ENCODE measurements at regions of chr10 and their contacts with region 1.

Region 1: GRCh38 chr10:93482145-93482834 is at the start of gene MYOF:
- DNase-seq: peak; percentile 69 to 84
- H3K4me3 ChIP-seq: peak within 1 kb of the TSS; percentile 52 to 66 (median 65)
- H3K27ac ChIP-seq: peak within 1 kb of the TSS; percentile 87 to 97
- H3K4me1 ChIP-seq: peaks cover 0 to 9% of the 10 kb centered on the region in 2 donors
- H3K27me3 ChIP-seq: no peaks in the 10 kb centered on the region
- CTCF ChIP-seq: peak; percentile 37 to 78 (median 72)
- POLR2A ChIP-seq: peak; percentile 81
- total RNA-seq, gene MYOF: 118 to 131 (median 130) TPM

Region 2: GRCh38 chr10:93376372-93377293 is 105.7 kb before region 1 on chr10:
- intact Hi-C with region 1: loop called (anchors 2 kb)
- DNase-seq: peak in 1 of 2 donors; percentile 47
- H3K4me3 ChIP-seq: no peak overlapping the region
- H3K27ac ChIP-seq: peak overlapping the region; percentile 74 to 86
- H3K4me1 ChIP-seq: no peaks in the 10 kb centered on the region
- H3K27me3 ChIP-seq: no peaks in the 10 kb centered on the region
- CTCF ChIP-seq: peak; percentile 96 to 99 (median 98)
- POLR2A ChIP-seq: no peak

Region 3: GRCh38 chr10:93437088-93437945 is 45.0 kb before region 1 on chr10:
- intact Hi-C with region 1: loop called (anchors 5 kb)
- DNase-seq: peak; percentile 66 to 88
- H3K4me3 ChIP-seq: peak overlapping the region in 2 of 3 donors; percentile 23 to 55
- H3K27ac ChIP-seq: peak overlapping the region; percentile 100
- H3K4me1 ChIP-seq: peaks cover 23 to 43% of the 10 kb centered on the region in 2 donors
- H3K27me3 ChIP-seq: no peaks in the 10 kb centered on the region
- CTCF ChIP-seq: no peak
- POLR2A ChIP-seq: no peak

Measured in breast epithelium (tissue), 4 donors.